Aorta (tissue), 5 donors: ENCODE measurements at regions of chr6 and their contacts with region 1.

Region 1: DNA sequence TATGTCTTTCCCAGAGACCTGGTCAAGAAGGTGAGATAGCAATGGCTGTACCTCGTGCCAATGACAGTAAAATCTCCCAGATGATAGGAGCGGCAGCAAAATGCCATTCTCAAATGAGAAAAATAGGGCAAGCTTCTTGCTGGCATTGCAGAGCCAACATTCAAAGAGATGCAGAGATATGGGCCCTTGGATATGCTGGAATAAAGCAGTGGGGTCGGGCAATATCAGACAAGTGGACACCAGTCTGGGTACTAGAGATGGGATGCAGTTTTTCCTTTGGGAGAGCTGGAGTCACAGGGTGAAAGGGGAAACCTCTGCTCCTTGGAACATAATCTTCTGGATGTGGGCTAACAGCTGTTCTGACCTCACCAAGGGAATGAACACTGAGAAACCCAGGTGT is 29.0 kb downstream of the GSTA4 start:
- DNase-seq: no peak
- ATAC-seq: no peak
- H3K4me3 ChIP-seq: no peak overlapping the region
- H3K27ac ChIP-seq: no peak overlapping the region
- H3K4me1 ChIP-seq: no peaks in the 10 kb centered on the region
- H3K27me3 ChIP-seq: no peaks in the 10 kb centered on the region

Region 2: GRCh38 chr6:52858416-52858815 is 107.7 kb before region 1 on chr6:
- intact Hi-C with region 1: no loop called
- DNase-seq: no peak
- ATAC-seq: no peak
- H3K4me3 ChIP-seq: no peak overlapping the region
- H3K27ac ChIP-seq: no peak overlapping the region
- H3K4me1 ChIP-seq: no peaks in the 10 kb centered on the region
- H3K27me3 ChIP-seq: no peaks in the 10 kb centered on the region

Region 3: DNA sequence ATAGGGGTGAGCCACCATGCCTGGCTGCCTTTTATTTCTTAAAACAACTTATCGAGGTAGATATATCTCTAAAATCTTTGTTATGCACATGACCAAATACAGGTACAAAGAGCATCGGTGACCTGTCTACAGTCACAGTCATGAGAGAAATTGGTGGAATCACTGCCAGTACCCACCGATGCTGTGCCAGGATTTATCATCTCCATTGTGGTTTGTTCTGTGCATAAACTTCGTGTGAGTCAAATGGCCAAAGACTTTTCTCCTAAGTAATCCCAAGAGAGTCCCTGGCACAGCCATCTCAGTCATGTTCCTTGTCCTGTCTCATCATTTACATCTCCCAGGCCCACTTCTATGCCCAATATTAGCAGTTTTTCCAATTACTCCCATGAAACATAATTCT is 65.6 kb before region 1 on chr6:
- intact Hi-C with region 1: loop called in 1 of 2 experiments (anchors 2 kb)
- DNase-seq: no peak
- ATAC-seq: no peak
- H3K4me3 ChIP-seq: no peak overlapping the region
- H3K27ac ChIP-seq: no peak overlapping the region
- H3K4me1 ChIP-seq: no peaks in the 10 kb centered on the region
- H3K27me3 ChIP-seq: no peaks in the 10 kb centered on the region

Region 4: DNA sequence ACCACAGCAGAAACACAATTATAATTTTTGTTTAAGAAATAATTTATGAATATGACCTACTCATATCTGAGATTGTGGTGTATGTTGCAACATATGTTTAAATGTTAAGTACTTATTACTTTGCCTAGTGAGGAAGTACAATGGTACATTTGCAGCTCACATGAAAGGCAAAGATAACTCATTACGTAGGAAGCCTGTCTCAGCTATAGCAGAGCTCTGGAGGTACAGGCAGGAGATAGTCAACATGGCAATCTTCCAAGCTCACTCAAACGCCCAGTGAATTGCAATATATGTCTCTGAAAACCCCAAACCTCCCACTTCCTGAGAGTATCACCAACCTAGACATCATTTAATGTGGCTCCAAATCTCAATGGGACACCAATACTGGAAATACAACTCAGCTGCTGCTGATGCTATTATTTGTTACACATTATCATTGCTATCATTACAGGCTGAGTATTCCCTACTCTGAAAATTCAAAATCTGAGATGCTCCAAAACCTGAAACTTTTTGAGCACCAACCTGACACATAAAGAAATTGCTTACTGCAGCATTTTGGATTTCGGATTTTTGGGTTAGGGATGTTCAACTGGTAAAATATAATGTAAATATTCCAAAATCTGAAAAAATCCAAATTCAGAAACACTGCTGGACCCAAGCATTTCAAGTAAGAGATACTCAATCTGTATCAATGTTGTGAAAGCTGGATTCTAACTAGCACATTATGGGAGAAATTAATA is 54.1 kb after region 1 on chr6:
- intact Hi-C with region 1: loop called in 1 of 2 experiments (anchors 2 kb)
- DNase-seq: no peak
- ATAC-seq: no peak
- H3K4me3 ChIP-seq: no peak overlapping the region
- H3K27ac ChIP-seq: no peak overlapping the region
- H3K4me1 ChIP-seq: no peaks in the 10 kb centered on the region
- H3K27me3 ChIP-seq: no peaks in the 10 kb centered on the region

Region 5: GRCh38 chr6:53103992-53104675 is 138.0 kb after region 1 on chr6:
- intact Hi-C with region 1: no loop called
- DNase-seq: no peak
- ATAC-seq: no peak
- H3K4me3 ChIP-seq: no peak overlapping the region
- H3K27ac ChIP-seq: no peak overlapping the region
- H3K4me1 ChIP-seq: peaks cover 0 to 3% of the 10 kb centered on the region in 2 donors
- H3K27me3 ChIP-seq: no peaks in the 10 kb centered on the region